A673 (cell line): ENCODE measurements at regions of chr2 and their contacts with region 1.

Region 1: DNA sequence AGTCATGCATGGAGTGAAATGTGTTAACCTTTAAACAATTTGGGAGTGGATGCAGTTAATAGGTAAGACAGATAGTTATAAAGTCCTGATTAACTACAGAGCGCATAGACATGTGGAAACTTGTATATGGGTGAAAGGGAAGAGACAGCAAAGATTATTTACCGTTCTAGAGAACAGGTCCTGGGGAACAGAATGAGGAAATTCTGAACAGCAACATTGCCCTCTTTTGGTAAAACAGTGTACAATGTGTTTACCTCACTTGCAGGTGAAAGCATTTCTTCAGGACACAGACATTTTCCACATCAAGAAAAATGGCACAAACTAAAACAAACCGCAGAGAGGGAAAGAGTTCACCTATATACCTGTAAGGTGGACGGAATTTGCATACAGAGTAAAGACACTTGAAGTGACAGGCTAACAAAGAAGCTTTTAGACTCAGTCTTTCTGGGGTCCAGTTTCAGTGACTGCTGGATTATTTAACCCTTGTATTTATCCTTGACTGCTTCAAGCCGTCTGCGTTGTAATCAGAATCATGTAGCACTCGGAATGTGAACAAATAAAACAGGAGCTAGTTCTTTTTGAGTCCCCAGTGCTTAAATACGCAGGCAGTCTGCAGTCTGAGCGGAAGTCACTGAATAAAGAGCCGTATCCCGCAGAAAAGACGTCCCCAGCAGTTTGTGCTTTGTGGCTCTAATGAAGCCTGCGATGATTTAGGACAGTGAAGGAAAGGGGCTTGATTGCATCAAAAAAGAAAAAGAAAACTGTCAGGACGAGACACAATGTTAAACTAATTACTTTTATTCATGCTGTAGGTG is 364.8 kb upstream of the GALNT5 start:
- DNase-seq: peak; percentile 61
- H3K4me3 ChIP-seq: peak overlapping the region; percentile 26
- H3K27ac ChIP-seq: no peak overlapping the region
- H3K4me1 ChIP-seq: no peaks in the 10 kb centered on the region
- H3K27me3 ChIP-seq: peaks cover 14% of the 10 kb centered on the region
- CTCF ChIP-seq: peak; percentile 67

Region 2: DNA sequence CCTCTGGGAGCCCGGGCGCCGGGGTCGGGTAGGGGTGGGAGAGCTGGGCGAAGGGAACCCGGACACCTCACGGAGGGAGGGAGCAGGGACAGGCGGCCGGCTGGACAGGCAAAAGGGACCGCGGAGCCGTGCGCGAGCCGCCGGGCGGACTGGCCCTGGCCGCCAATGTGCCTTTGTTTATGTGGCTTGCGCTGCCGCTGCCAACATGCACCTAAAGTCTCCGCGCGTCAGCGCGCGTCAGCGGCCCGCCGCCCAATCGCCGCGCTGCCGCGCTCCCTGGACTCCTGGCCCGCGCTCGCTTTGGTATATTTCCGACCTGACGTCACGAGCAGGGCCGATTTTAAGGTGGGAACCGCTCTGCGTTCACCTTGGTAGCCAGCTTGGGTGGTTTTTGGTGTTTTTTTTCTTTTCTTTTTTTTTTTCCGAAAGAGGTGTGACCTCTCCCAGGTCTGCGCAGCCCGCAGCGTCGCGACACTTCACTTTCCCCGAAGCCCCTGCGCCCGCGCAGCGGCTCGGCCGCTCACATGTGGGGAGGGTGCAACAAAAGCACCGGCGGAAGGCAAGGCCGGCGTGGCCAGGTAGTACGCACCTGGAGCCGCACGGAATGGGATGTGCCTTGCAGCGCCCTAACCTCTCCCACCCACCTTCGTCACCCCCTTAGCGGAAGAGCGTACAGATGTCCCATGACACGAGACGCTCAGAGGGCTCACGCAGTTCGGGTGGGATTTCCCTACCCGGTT is 560.0 kb before region 1 on chr2 and contains the start of gene NR4A2:
- CTCF ChIA-PET with region 1: no interaction called
- POLR2A ChIA-PET with region 1: no interaction called
- intact Hi-C with region 1: loop called (anchors 2 kb)
- DNase-seq: peak; percentile 87
- H3K4me3 ChIP-seq: peak within 1 kb of the TSS; percentile 79
- H3K27ac ChIP-seq: peak within 1 kb of the TSS; percentile 91
- H3K4me1 ChIP-seq: peaks cover 20% of the 10 kb centered on the region
- H3K27me3 ChIP-seq: no peaks in the 10 kb centered on the region
- CTCF ChIP-seq: no peak
- total RNA-seq, gene NR4A2: 1.1 and 1.8 TPM in 2 replicates

Region 3: DNA sequence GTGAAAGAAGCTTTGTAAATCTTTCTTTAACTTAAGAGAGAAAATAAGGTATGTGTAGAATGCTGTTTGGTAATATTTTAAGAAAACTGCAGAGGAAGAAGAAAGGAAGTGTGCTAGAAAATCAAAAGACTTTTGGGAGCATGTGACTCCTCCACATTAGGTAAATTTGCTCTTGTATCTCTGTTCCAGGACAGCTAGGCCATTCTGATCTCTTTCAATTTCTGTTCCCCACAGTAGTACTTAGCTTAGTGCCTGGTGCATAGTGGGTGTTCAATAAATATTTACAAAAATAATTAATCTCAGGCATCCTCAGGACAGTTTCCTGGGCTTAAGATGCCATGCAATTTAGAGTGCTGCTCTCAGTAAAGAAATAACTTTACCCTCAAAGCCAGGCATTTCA is 351.4 kb before region 1 on chr2:
- CTCF ChIA-PET with region 1: no interaction called
- POLR2A ChIA-PET with region 1: no interaction called
- intact Hi-C with region 1: no loop called
- DNase-seq: no peak
- H3K4me3 ChIP-seq: no peak overlapping the region
- H3K27ac ChIP-seq: no peak overlapping the region
- H3K4me1 ChIP-seq: no peaks in the 10 kb centered on the region
- H3K27me3 ChIP-seq: no peaks in the 10 kb centered on the region
- CTCF ChIP-seq: no peak

Region 4: DNA sequence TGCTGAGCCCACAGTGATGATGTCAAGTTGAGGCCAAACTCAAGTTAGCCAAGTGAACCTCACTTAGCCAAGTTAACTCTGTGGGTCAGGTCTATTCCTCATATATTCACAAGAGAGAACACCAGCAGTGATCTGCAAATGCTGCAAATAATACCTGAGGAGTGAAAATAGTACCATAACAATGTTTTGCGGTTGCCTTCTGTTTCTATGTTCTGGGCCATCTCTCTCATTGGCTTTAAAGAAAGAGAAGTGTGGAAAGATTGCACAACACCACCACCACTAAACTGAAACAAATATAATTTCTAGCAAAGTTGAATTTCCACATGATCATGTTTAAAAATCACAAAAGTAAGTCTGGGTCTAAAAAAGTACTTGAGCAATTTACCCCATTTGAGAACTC is 153.7 kb after region 1 on chr2:
- CTCF ChIA-PET with region 1: no interaction called
- POLR2A ChIA-PET with region 1: no interaction called
- intact Hi-C with region 1: loop called (anchors 2 kb)
- DNase-seq: no peak
- H3K4me3 ChIP-seq: no peak overlapping the region
- H3K27ac ChIP-seq: no peak overlapping the region
- H3K4me1 ChIP-seq: peaks cover 12% of the 10 kb centered on the region
- H3K27me3 ChIP-seq: peaks cover 6% of the 10 kb centered on the region
- CTCF ChIP-seq: no peak

Region 5: GRCh38 chr2:157194097-157194688 is 301.5 kb after region 1 on chr2:
- CTCF ChIA-PET with region 1: no interaction called
- POLR2A ChIA-PET with region 1: no interaction called
- intact Hi-C with region 1: loop called (anchors 5 kb)
- DNase-seq: peak; percentile 71
- H3K4me3 ChIP-seq: no peak overlapping the region
- H3K27ac ChIP-seq: no peak overlapping the region
- H3K4me1 ChIP-seq: no peaks in the 10 kb centered on the region
- H3K27me3 ChIP-seq: no peaks in the 10 kb centered on the region
- CTCF ChIP-seq: peak; percentile 82